ENCODE measurements at regions of chr10 and their contacts with region 1.

Region 1: GRCh38 chr10:124741281-124741921 is 2.8 kb downstream of the FAM53B start:
- DNase-seq: peak; percentile 88
- ATAC-seq: peak; percentile 67
- H3K4me3 Mint-ChIP-seq: peak overlapping the region; percentile 65
- H3K27ac Mint-ChIP-seq: peak overlapping the region; percentile 84
- H3K4me1 Mint-ChIP-seq: peaks cover 74% of the 10 kb centered on the region
- H3K27me3 Mint-ChIP-seq: peaks cover 7% of the 10 kb centered on the region

Region 2: DNA sequence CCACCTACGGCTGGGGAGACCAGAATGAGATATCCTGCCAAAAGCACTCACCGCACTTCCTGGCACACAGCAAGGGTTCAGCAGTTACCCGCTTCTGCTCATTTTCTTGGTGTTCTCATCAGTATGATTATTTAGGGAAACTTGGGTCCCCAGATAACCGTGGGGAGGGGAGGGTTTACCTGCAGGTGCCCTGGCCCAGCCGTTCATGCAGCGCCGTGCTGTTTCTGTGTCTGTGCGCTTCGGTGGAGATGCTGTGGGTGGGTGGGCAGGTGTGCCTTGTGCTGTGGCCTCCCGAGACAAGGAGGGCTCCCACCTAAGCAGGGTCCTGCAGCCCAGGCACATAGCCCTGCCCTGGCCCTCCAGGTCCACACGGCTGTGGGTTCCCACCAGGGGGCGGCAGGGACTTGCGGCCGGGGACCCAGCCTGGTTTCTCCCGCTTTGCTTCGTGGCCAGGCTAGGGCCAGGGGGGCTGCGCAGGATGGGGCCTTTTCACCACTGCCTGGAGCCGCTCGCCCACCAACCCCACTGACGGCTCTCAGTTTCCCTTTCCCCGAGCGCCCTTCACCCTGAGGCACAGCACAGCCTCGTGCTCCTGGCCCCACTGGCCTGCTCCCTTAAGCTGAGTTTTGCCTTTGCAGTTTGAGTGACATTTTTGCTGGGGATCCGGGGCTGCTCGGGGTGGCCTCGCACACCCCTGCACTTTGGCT is 201.3 kb before region 1 on chr10:
- CTCF ChIA-PET with region 1: interaction called, 54 read pairs
- POLR2A ChIA-PET with region 1: no interaction called
- intact Hi-C with region 1: loop called (anchors 1 kb)
- DNase-seq: peak; percentile 81
- ATAC-seq: peak; percentile 84
- H3K4me3 Mint-ChIP-seq: no peak overlapping the region
- H3K27ac Mint-ChIP-seq: no peak overlapping the region
- H3K4me1 Mint-ChIP-seq: peaks cover 4% of the 10 kb centered on the region
- H3K27me3 Mint-ChIP-seq: no peaks in the 10 kb centered on the region

Region 3: DNA sequence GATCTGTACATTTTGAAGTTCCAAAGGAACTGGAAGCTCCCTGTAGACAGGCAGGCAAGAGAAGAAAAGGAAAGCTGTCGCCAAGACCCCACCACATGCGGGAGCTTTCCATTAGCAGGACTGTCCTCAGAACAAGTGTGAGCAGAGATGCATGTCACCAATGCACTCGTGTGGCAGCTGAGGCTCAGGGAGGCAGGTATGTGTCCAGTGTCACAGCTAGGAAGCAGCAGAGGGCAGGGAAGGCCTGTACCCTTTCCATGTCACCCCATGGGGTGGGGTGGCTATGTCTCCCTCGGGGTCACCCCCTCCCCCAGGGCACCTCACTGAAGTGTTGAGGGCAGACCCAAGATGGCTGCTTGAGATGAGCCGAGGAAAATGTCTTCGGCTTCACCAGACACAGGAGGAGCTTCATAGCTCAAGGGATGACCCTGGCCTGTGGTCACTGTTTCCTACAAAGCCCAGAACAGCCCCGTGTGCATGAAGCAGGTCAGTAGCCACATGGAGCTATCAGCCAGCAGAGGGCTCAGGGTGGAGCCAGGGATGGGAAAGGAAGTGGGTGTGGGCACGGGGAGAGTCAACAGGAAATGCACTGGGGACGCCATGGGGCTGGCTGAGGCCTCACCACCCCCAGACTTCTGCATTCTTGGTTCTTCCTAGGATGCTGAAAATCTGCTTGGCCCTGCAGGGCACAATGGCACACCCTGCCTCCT is 93.8 kb before region 1 on chr10:
- CTCF ChIA-PET with region 1: interaction called, 28 read pairs
- POLR2A ChIA-PET with region 1: interaction called, 4 read pairs
- intact Hi-C with region 1: loop called (anchors 2 kb)
- DNase-seq: peak; percentile 80
- ATAC-seq: peak; percentile 74
- H3K4me3 Mint-ChIP-seq: peak overlapping the region; percentile 40
- H3K27ac Mint-ChIP-seq: peak overlapping the region; percentile 85
- H3K4me1 Mint-ChIP-seq: peaks cover 75% of the 10 kb centered on the region
- H3K27me3 Mint-ChIP-seq: no peaks in the 10 kb centered on the region

Region 4: GRCh38 chr10:124688889-124689670 is 52.3 kb before region 1 on chr10:
- CTCF ChIA-PET with region 1: interaction called, 55 read pairs
- POLR2A ChIA-PET with region 1: interaction called, 20 read pairs
- intact Hi-C with region 1: loop called (anchors 1 to 2 kb)
- DNase-seq: peak; percentile 81
- ATAC-seq: peak; percentile 89
- H3K4me3 Mint-ChIP-seq: peak overlapping the region; percentile 8
- H3K27ac Mint-ChIP-seq: peak overlapping the region; percentile 84
- H3K4me1 Mint-ChIP-seq: peaks cover 81% of the 10 kb centered on the region
- H3K27me3 Mint-ChIP-seq: peaks cover 2% of the 10 kb centered on the region

Region 5: GRCh38 chr10:124708922-124709520 is 32.4 kb before region 1 on chr10:
- CTCF ChIA-PET with region 1: interaction called, 36 read pairs
- POLR2A ChIA-PET with region 1: interaction called, 4 read pairs
- intact Hi-C with region 1: loop called in 1 of 2 experiments (anchors 5 kb)
- DNase-seq: no peak
- ATAC-seq: no peak
- H3K4me3 Mint-ChIP-seq: no peak overlapping the region
- H3K27ac Mint-ChIP-seq: no peak overlapping the region
- H3K4me1 Mint-ChIP-seq: peaks cover 83% of the 10 kb centered on the region
- H3K27me3 Mint-ChIP-seq: no peaks in the 10 kb centered on the region

Region 6: DNA sequence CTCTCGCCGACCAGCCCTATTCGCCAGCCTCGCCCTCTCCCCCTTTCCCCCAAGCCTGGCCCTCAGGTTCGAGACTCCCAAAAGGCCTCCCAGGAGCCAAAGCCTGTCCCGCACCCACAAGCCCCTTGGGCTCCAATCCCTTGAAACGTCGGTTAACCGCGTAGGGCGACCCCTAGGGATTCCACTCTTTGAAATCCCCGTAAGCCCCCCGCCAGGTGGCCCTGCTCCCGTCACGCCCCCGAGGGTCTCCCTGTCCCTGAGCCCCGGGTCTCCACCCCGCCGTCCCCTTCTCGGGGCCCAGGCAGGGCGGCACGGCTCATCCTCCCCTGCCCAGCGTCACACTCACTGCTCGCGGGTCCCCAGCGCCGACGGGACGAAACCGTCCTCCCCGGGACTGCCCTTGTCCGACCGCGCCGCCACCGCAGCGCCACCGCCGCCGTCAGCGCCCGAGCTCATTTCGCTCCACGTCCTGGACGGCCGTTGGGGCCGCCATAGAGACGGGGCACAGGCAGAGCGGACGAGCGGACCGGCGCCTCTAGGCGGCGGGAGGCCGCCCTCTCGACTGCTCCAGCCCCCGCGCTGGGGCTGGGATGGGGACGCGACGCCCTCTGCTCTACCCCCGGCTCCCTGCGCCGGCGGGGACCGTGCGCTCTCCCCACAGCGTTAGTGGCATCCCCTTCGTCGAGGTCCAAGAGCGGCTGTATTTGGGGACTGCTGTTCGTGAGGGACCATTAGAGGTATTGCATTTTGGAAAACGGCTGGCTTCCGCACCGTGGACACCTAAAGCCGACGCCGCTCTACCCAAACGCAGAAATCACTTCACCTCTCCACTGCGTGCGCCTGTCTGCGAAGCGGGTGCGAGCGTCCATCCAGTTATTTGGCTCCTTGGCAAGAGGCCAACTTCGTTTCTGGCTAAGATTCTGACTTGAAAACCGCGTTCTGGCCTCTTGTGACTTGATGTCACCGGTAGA is 50.3 kb after region 1 on chr10 and contains the start of gene EEF1AKMT2:
- CTCF ChIA-PET with region 1: interaction called, 6 read pairs
- POLR2A ChIA-PET with region 1: no interaction called
- intact Hi-C with region 1: loop called (anchors 1 to 5 kb)
- DNase-seq: peak; percentile 91
- ATAC-seq: peak; percentile 93
- H3K4me3 Mint-ChIP-seq: peak within 1 kb of the TSS; percentile 98
- H3K27ac Mint-ChIP-seq: peak within 1 kb of the TSS; percentile 90
- H3K4me1 Mint-ChIP-seq: peaks cover 16% of the 10 kb centered on the region
- H3K27me3 Mint-ChIP-seq: no peaks in the 10 kb centered on the region
- total RNA-seq, gene EEF1AKMT2: 21.4 to 28.4 TPM

Region 7: GRCh38 chr10:125038637-125039036 is 297.2 kb after region 1 on chr10:
- CTCF ChIA-PET with region 1: no interaction called
- POLR2A ChIA-PET with region 1: no interaction called
- intact Hi-C with region 1: no loop called
- DNase-seq: no peak
- ATAC-seq: no peak
- H3K4me3 Mint-ChIP-seq: no peak overlapping the region
- H3K27ac Mint-ChIP-seq: no peak overlapping the region
- H3K4me1 Mint-ChIP-seq: no peaks in the 10 kb centered on the region
- H3K27me3 Mint-ChIP-seq: no peaks in the 10 kb centered on the region

Region 8: GRCh38 chr10:125316449-125316848 is 575.0 kb after region 1 on chr10:
- CTCF ChIA-PET with region 1: no interaction called
- POLR2A ChIA-PET with region 1: no interaction called
- intact Hi-C with region 1: no loop called
- DNase-seq: no peak
- ATAC-seq: no peak
- H3K4me3 Mint-ChIP-seq: no peak overlapping the region
- H3K27ac Mint-ChIP-seq: no peak overlapping the region
- H3K4me1 Mint-ChIP-seq: no peaks in the 10 kb centered on the region
- H3K27me3 Mint-ChIP-seq: no peaks in the 10 kb centered on the region